ENCODE measurements at regions of chr19 and their contacts with region 1.

Region 1: DNA sequence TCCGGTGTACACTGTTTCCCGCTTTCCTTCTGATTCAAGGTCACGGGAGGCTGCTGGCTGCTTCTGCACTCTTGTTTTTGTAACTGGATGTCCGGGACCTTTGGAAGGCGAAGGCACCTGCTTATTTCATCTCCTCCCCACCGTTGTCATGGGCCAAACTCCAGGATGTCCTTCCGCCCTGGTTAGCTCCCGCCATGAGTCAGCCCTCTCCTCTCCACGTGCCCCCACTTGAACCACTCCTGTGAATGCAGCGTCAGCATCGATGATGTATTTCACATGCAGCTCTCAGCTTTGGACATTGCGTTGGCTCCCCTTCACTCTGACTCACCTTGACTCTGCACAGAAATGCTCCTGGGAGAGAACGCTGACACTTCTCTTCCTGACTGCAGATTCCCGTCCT is 5.5 kb upstream of the GALP start:
- DNase-seq: no peak
- H3K4me3 ChIP-seq: no peak overlapping the region
- H3K27ac ChIP-seq: no peak overlapping the region
- H3K4me1 ChIP-seq: no peaks in the 10 kb centered on the region
- H3K27me3 ChIP-seq: no peaks in the 10 kb centered on the region
- CTCF ChIP-seq: no peak

Region 2: DNA sequence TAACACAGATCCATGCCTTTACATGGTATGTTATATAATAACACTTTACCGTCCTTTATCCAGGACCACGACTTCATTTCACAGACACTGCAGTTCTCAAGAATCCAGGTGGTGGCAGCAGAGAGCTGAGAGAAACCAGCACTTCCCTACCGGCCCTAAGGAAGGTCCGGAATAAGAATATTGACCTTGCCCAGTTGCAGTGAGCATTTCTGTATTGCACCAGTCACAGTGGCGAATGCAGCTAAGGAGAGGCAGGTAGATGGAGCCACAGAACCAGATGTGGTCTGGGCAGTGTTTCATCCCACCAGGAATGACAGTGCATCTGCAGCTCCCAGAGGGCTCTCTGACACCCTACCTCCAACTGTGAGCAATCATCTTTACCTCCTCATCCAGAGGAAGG is 93.8 kb before region 1 on chr19:
- intact Hi-C with region 1: loop called (anchors 1 kb)
- DNase-seq: no peak
- H3K4me3 ChIP-seq: no peak overlapping the region
- H3K27ac ChIP-seq: no peak overlapping the region
- H3K4me1 ChIP-seq: peaks cover 0 to 5% of the 10 kb centered on the region in 2 donors
- H3K27me3 ChIP-seq: no peaks in the 10 kb centered on the region
- CTCF ChIP-seq: peak; percentile 51 to 85 (median 82)

Region 3: DNA sequence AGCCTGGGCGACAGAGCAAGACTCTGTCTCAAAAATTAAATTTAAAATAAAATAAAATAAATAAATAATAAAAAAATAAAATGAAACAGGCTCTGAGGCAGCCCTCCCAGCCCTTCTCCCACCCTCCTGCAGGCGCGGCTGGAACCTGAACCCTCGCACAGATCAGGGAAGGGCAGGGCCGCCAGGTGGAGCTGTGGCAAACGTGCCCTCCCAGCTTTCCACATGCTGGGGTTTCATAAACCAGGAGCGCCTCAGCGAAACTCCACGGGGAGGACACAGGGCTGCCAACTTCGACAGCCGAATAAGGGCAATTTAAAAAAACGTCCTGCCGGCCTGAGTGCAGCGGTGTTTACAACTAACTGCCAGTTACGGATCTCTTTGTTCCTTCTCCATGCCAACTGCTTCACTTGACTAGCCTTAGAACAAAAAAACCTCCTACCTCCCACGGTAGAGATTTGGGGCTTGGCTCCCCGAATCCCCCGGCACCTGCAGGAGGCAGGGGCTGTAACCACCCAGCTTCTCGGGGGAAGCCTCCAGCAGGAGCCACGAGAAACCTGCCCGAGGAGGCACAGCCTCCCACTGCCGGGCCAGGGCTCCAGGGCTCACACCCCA is 65.1 kb before region 1 on chr19:
- intact Hi-C with region 1: loop called (anchors 1 kb)
- DNase-seq: peak in 1 of 2 donors; percentile 86
- H3K4me3 ChIP-seq: peak overlapping the region; percentile 39 to 47
- H3K27ac ChIP-seq: peak overlapping the region; percentile 53 to 56
- H3K4me1 ChIP-seq: peaks cover 12 to 32% of the 10 kb centered on the region in 2 donors
- H3K27me3 ChIP-seq: no peaks in the 10 kb centered on the region
- CTCF ChIP-seq: peak; percentile 65 to 81 (median 81)

Region 4: DNA sequence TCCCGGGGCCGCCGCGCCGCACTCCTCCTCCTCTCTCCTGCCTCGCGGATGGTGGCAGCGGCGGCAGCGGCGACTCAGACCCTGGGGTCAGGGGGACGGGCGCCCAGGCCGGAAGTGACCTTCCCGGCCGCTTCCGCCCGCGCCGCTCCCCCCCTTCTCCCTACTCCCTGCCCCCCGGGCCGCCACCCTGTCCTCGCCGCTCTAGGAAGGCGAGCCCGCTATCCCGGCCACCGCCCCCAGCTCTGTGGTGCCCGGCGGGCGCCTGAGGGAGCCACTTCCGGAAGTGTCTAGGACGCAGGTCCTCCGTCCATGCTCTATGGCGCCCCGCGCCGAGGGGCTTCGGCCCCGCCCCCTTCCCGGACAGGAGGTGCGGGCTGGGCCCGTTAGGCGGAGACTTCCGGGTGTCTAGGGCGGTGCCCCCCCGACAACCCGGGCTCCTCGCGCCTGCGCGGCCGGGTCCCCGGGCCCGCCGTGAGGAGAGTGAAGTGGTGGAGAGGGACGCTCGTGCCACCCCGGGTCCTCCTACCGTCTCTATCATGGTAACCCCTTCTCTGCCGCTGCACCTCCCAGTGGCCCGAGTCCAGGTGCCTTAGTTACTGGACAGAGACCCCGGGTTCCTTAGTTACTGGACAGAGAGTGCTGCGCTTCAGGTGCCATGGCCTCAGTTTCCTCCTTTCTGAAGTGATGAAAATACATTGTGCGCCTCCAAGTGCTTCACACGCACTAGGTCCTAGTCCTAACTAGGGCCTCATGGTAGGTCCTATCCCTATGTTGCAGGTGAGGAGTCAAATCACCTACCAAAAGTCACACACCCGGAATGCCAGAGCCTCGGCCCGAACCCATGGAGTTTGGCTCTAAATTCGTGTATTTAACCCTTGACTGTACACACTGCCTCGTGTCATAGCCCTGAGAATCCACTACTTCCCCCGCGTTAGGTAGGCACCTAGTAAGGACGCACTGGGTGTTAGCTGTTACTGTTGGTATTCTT is 48.8 kb before region 1 on chr19 and contains the start of gene ZNF787:
- intact Hi-C with region 1: no loop called
- DNase-seq: peak; percentile 95 to 100
- H3K4me3 ChIP-seq: peak within 1 kb of the TSS; percentile 93 to 99
- H3K27ac ChIP-seq: peak within 1 kb of the TSS; percentile 89 to 99
- H3K4me1 ChIP-seq: peaks cover 13 to 23% of the 10 kb centered on the region in 2 donors
- H3K27me3 ChIP-seq: no peaks in the 10 kb centered on the region
- CTCF ChIP-seq: no peak
- total RNA-seq, gene ZNF787: 18.1 TPM

Measured in ascending aorta (tissue), 2 donors.